Endothelial cell of umbilical vein (primary cell): ENCODE measurements at regions of chr1 and their contacts with region 1.

Region 1: DNA sequence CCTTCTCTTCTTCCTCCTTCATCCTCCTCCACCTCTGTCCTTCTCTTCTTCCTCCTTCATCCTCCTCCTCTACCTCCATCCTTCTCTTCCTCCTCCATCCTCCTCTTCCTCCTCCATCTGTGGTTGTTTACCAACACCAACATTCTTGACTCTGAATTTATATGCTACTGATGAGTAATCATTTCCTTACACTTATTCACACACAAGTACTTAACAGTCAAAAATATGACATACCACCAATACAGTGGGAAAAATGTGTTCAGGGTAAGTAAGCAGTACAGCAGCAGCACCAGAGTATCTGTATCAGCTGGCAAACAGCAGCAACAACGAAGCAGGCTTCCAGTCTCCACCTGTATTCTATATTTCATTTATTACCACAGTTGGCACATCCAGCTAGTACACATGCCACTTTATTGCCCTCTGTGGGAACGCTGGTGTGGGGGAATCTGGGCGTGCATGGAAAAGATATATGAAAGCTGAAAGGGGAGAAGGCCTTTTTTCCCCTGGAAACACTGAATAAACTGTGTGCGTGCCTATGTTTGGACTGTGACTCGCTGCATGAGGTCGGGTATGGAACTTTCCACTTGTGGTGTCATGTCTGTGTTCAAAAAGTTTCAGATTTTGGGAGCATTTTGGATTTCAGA is 16.0 kb downstream of the ADSS2 start:
- DNase-seq: peak; percentile 82
- H3K4me3 ChIP-seq: no peak overlapping the region
- H3K27ac ChIP-seq: peak overlapping the region; percentile 75
- H3K4me1 ChIP-seq: peaks cover 37% of the 10 kb centered on the region
- H3K27me3 ChIP-seq: no peaks in the 10 kb centered on the region
- CTCF ChIP-seq: no peak
- POLR2A ChIP-seq: no peak

Region 2: GRCh38 chr1:244325056-244325764 is 110.5 kb before region 1 on chr1:
- CTCF ChIA-PET with region 1: no interaction called
- POLR2A ChIA-PET with region 1: no interaction called
- dilution Hi-C with region 1: no loop called
- intact Hi-C with region 1: loop called (anchors 2 kb)
- DNase-seq: peak; percentile 77
- H3K4me3 ChIP-seq: peak overlapping the region in 2 of 3 experiments; percentile 39 to 65
- H3K27ac ChIP-seq: peak overlapping the region; percentile 87
- H3K4me1 ChIP-seq: peaks cover 40% of the 10 kb centered on the region
- H3K27me3 ChIP-seq: no peaks in the 10 kb centered on the region
- CTCF ChIP-seq: no peak
- POLR2A ChIP-seq: peak; percentile 46

Region 3: GRCh38 chr1:244353551-244354091 is 82.1 kb before region 1 on chr1:
- CTCF ChIA-PET with region 1: no interaction called
- POLR2A ChIA-PET with region 1: no interaction called
- dilution Hi-C with region 1: no loop called
- intact Hi-C with region 1: loop called (anchors 5 kb)
- DNase-seq: peak; percentile 98
- H3K4me3 ChIP-seq: no peak overlapping the region
- H3K27ac ChIP-seq: peak overlapping the region; percentile 72
- H3K4me1 ChIP-seq: peaks cover 39% of the 10 kb centered on the region
- H3K27me3 ChIP-seq: no peaks in the 10 kb centered on the region
- CTCF ChIP-seq: no peak
- POLR2A ChIP-seq: peak; percentile 58